Dorsolateral prefrontal cortex (tissue), 120 donors: ENCODE measurements at regions of chr1 and their contacts with region 1.

Region 1: DNA sequence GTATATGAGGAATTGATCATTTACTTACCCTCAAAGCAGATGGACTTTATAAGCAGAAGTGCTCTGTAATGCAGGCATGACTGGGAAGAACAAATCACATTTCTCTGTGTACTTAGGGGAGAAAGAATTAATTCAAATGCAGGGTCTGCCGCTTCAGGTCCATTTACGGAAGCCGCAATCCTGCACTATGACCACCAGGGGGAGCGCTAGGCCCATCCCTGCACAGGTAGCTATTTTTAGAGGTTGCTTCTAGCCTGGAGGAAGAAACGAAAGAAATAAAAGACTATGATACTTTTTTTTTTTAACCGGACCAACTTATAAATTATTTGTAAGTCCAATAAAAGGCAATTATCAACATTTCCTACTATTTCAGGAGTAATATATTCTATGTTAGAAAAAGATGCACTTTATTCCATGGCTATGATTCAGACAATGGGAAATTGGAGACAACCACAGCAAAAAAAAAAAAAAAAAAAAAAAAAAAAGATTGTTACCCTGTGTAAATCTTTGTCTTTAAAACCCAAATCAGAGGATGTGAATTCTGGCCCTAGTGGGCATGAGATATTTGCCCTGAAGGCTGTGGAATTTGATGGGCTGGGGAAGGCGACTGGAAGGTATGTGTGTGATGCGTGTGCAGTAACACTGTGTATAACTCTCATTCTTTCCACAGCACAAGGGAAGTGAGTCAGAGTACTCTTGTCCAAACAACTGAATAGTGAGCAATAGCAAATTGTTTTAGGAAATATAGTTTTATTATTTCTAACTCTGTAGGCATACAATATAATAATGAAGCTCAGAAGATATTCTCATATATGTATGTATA is 12.9 kb upstream of the FYB2 start:
- DNase-seq: peak; percentile 37 to 79 (median 56)
- H3K4me3 ChIP-seq: peak overlapping the region in 6 of 59 donors; percentile 0 to 29 (median 16)
- H3K27ac ChIP-seq: no peak overlapping the region
- H3K27me3 ChIP-seq: peaks cover 0 to 8% (median 0%) of the 10 kb centered on the region in 45 donors
- CTCF ChIP-seq: peak; percentile 84 to 100 (median 97)

Region 2: DNA sequence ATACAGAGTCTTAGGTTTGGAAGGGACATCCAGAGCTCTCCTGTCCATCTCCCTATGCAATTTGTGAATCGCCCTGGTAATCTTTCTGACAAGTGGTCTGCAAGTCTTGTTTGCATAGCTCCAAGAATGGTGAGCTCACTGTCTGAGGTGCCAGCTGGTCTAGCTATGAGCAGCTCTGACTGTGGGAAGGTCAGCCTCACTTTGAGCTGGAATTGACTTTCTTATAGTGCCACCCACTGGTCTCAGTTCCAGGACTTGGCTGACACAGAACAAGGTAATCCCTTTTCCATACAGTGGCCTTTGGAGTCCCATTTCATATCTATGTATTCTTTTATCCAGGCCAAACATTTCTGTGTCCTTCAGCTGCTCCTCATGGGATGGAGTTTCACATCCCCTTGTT is 229.3 kb after region 1 on chr1:
- intact Hi-C with region 1: loop called in 1 of 2 experiments (anchors 5 kb)
- DNase-seq: no peak
- H3K4me3 ChIP-seq: no peak overlapping the region
- H3K27ac ChIP-seq: no peak overlapping the region
- H3K27me3 ChIP-seq: no peaks in the 10 kb centered on the region
- CTCF ChIP-seq: peak in 21 of 56 donors; percentile 11 to 51 (median 23)

Region 3: GRCh38 chr1:57424231-57425027 is 592.3 kb after region 1 on chr1:
- intact Hi-C with region 1: loop called in 1 of 2 experiments (anchors 5 kb)
- DNase-seq: peak in 7 of 10 donors; percentile 14 to 67 (median 44)
- H3K4me3 ChIP-seq: peak overlapping the region in 58 of 59 donors; percentile 23 to 72 (median 56)
- H3K27ac ChIP-seq: peak overlapping the region in 29 of 59 donors; percentile 10 to 93 (median 53)
- H3K27me3 ChIP-seq: peaks cover 0 to 75% (median 27%) of the 10 kb centered on the region in 45 donors
- CTCF ChIP-seq: peak in 54 of 56 donors; percentile 19 to 65 (median 50)

Region 4: GRCh38 chr1:58035523-58035922 is 1203.4 kb after region 1 on chr1:
- intact Hi-C with region 1: loop called in 1 of 2 experiments (anchors 10 kb)
- DNase-seq: no peak
- H3K4me3 ChIP-seq: no peak overlapping the region
- H3K27ac ChIP-seq: no peak overlapping the region
- H3K27me3 ChIP-seq: peaks cover 0 to 9% (median 0%) of the 10 kb centered on the region in 45 donors
- CTCF ChIP-seq: peak in 8 of 56 donors; percentile 16 to 25 (median 17)

Region 5: GRCh38 chr1:58162952-58163550 is 1331.0 kb after region 1 on chr1:
- intact Hi-C with region 1: loop called (anchors 5 to 10 kb)
- DNase-seq: peak in 8 of 10 donors; percentile 36 to 63 (median 46)
- H3K4me3 ChIP-seq: no peak overlapping the region
- H3K27ac ChIP-seq: no peak overlapping the region
- H3K27me3 ChIP-seq: peaks cover 0 to under 1% (median 0%) of the 10 kb centered on the region in 45 donors
- CTCF ChIP-seq: peak; percentile 54 to 88 (median 77)